B cell (primary cell): ENCODE measurements at regions of chr16 and their contacts with region 1.

Region 1: DNA sequence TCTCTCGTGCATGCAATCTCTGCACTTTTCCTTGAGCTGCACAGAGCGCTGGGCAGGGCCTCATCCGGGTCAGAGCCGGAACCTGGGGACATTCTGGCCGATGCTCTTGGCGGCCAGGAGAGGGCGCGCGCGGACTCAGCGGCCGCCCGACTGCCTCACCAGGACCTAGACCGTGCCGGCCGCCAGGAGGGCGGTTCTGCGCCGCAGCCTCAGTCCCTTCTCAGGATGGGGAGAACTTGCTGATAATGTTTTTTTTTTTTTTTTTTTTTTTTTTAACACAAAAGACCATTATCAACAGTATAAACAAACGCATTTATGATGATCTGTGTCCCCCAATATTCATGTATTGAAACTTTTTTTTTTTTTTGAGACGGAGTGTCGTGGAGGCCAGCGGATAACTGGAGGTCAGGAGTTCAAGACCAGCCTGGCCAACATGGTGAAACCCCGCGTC is 8.1 kb upstream of the FLYWCH2 start:
- DNase-seq: peak; percentile 86
- ATAC-seq: peak; percentile 100
- H3K4me3 ChIP-seq: no peak overlapping the region
- H3K4me3 Mint-ChIP-seq: no peak overlapping the region
- H3K27ac ChIP-seq: no peak overlapping the region
- H3K27ac Mint-ChIP-seq: peak overlapping the region; percentile 53
- H3K4me1 ChIP-seq: peaks cover 0 to 5% of the 10 kb centered on the region in 2 donors
- H3K4me1 Mint-ChIP-seq: peaks cover 2% of the 10 kb centered on the region
- H3K27me3 ChIP-seq: peaks cover 0 to 2% (median 0%) of the 10 kb centered on the region in 4 experiments
- H3K27me3 Mint-ChIP-seq: peaks cover 13% of the 10 kb centered on the region
- CTCF ChIP-seq: peak; percentile 94

Region 2: DNA sequence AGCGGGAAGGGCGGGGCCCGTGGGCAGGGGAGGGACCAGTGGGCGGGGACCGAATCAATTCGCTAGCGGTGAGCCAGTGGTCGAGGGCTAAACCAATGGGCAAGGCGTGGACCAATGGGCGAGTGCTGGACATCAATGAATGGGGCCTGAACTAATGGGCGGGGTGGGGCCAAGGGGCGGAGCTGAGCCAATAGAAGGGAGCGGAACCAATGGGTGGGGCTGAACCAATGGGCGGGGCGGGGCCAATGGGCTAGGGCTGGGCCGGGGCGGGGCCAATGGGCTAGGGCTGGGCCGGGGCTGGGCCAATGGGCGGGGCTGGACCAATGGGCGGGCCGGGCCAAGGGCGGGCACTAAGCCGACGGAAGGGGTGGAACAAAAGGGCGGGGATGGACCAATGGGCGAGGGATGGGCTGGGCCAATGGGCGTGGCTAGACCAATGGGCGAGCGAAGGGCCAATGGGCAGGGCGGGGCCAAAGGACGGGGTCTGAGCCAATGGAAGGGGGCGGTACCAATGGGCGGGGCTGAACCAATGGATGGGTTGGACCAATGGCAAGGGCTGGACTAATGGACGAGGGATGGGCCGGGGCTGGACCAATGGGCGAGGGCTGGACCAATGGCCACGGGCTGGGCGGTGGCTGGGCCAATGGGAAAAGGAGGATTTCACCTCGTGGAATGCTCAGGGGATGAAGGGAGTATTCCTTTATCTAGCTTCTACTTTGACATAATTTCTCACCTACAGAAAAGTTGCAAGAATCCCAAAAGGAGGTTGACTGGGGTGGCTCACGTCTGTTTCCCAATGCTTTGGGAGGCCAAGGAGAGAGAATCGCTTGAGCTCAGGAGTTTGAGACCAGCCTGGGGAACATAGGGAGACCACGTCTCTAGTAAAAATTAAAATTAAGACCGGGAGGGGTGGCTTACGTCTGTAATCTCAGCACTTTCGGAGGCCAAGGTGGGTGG is 30.8 kb after region 1 on chr16:
- CTCF ChIA-PET with region 1: interaction called, 23 read pairs
- POLR2A ChIA-PET with region 1: interaction called, 5 read pairs
- intact Hi-C with region 1: loop called (anchors 1 kb)
- DNase-seq: peak; percentile 95
- ATAC-seq: peak; percentile 75
- H3K4me3 ChIP-seq: peak overlapping the region; percentile 21 to 85 (median 74)
- H3K4me3 Mint-ChIP-seq: peak overlapping the region; percentile 93
- H3K27ac ChIP-seq: peak overlapping the region in 1 of 2 donors; percentile 22
- H3K27ac Mint-ChIP-seq: peak overlapping the region; percentile 84
- H3K4me1 ChIP-seq: peaks cover 10 to 28% of the 10 kb centered on the region in 2 donors
- H3K4me1 Mint-ChIP-seq: peaks cover 33% of the 10 kb centered on the region
- H3K27me3 ChIP-seq: no peaks in the 10 kb centered on the region
- H3K27me3 Mint-ChIP-seq: no peaks in the 10 kb centered on the region
- CTCF ChIP-seq: no peak

Region 3: DNA sequence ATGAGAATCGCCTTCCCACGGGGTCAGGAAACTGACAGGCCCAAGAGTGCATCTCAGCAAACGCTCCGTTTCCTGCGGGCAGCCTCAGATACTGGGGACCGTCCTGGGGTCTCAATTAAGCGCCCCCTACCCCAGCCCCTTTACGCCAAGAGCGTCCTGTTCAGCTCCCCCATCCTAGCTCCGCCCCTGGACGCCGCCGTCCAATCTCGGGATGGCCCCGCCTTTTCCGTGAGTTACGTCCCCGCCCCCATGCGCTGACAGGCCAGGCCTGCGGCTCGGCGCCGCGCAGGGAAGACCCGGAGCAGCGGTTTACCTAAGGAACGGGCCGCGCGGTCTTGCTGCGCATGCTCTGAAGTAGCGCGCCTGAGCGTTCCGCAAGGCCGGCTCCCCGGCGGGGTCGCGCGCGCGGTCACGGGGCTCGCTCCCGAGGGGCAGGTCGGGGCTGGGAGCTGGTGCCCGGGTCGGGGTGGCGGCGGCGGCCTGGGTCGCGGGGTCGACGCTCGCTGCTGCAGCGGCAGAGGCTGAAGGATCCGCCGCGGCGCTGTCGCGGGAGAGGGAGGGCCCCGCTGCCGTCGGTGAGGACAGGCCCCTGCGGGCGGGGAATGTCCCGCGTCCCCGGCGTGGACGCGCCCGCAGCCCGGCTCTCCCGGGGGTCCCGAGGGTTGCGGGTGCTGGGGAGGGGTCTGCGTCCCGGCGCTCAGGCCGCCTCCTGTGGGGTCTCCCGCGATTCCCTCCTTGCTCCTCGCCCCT is 36.8 kb after region 1 on chr16 and contains the start of gene FLYWCH1:
- CTCF ChIA-PET with region 1: interaction called, 61 read pairs
- POLR2A ChIA-PET with region 1: interaction called, 5 read pairs
- intact Hi-C with region 1: loop called (anchors 1 kb)
- DNase-seq: peak; percentile 98
- ATAC-seq: peak; percentile 99
- H3K4me3 ChIP-seq: peak within 1 kb of the TSS; percentile 50 to 77 (median 70)
- H3K4me3 Mint-ChIP-seq: peak within 1 kb of the TSS; percentile 96
- H3K27ac ChIP-seq: peak within 1 kb of the TSS; percentile 38 to 66
- H3K27ac Mint-ChIP-seq: peak within 1 kb of the TSS; percentile 92
- H3K4me1 ChIP-seq: peaks cover 11 to 18% of the 10 kb centered on the region in 2 donors
- H3K4me1 Mint-ChIP-seq: peaks cover 29% of the 10 kb centered on the region
- H3K27me3 ChIP-seq: no peaks in the 10 kb centered on the region
- H3K27me3 Mint-ChIP-seq: no peaks in the 10 kb centered on the region
- CTCF ChIP-seq: no peak
- total RNA-seq, gene FLYWCH1: 119 and 120 TPM in 2 replicates

Region 4: GRCh38 chr16:2919511-2920255 is 44.7 kb after region 1 on chr16:
- CTCF ChIA-PET with region 1: interaction called, 61 read pairs
- POLR2A ChIA-PET with region 1: no interaction called
- intact Hi-C with region 1: loop called (anchors 1 kb)
- DNase-seq: peak; percentile 80
- ATAC-seq: peak; percentile 69
- H3K4me3 ChIP-seq: no peak overlapping the region
- H3K4me3 Mint-ChIP-seq: no peak overlapping the region
- H3K27ac ChIP-seq: no peak overlapping the region
- H3K27ac Mint-ChIP-seq: no peak overlapping the region
- H3K4me1 ChIP-seq: peaks cover 0 to 3% of the 10 kb centered on the region in 2 donors
- H3K4me1 Mint-ChIP-seq: peaks cover 2% of the 10 kb centered on the region
- H3K27me3 ChIP-seq: no peaks in the 10 kb centered on the region
- H3K27me3 Mint-ChIP-seq: no peaks in the 10 kb centered on the region
- CTCF ChIP-seq: peak; percentile 96

Region 5: GRCh38 chr16:2926650-2927646 is 52.0 kb after region 1 on chr16:
- CTCF ChIA-PET with region 1: interaction called, 61 read pairs
- POLR2A ChIA-PET with region 1: interaction called, 4 read pairs
- intact Hi-C with region 1: loop called (anchors 1 kb)
- DNase-seq: peak; percentile 91
- ATAC-seq: peak; percentile 100
- H3K4me3 ChIP-seq: no peak overlapping the region
- H3K4me3 Mint-ChIP-seq: peak overlapping the region; percentile 17
- H3K27ac ChIP-seq: no peak overlapping the region
- H3K27ac Mint-ChIP-seq: no peak overlapping the region
- H3K4me1 ChIP-seq: peaks cover 4 to 9% of the 10 kb centered on the region in 2 donors
- H3K4me1 Mint-ChIP-seq: peaks cover 7% of the 10 kb centered on the region
- H3K27me3 ChIP-seq: no peaks in the 10 kb centered on the region
- H3K27me3 Mint-ChIP-seq: no peaks in the 10 kb centered on the region
- CTCF ChIP-seq: peak; percentile 94

Region 6: GRCh38 chr16:3009565-3010390 is 134.8 kb after region 1 on chr16:
- CTCF ChIA-PET with region 1: no interaction called
- POLR2A ChIA-PET with region 1: no interaction called
- intact Hi-C with region 1: no loop called
- DNase-seq: no peak
- ATAC-seq: no peak
- H3K4me3 ChIP-seq: no peak overlapping the region
- H3K4me3 Mint-ChIP-seq: no peak overlapping the region
- H3K27ac ChIP-seq: no peak overlapping the region
- H3K27ac Mint-ChIP-seq: no peak overlapping the region
- H3K4me1 ChIP-seq: peaks cover 25 to 26% of the 10 kb centered on the region in 2 donors
- H3K4me1 Mint-ChIP-seq: peaks cover 22% of the 10 kb centered on the region
- H3K27me3 ChIP-seq: peaks cover 0 to 22% (median 10%) of the 10 kb centered on the region in 4 experiments
- H3K27me3 Mint-ChIP-seq: peaks cover 18% of the 10 kb centered on the region
- CTCF ChIP-seq: no peak